ENCODE measurements at regions of chr2 and their contacts with region 1.

Region 1: GRCh38 chr2:235627682-235628081 is 133.8 kb downstream of the AGAP1 start:
- DNase-seq: no peak
- ATAC-seq: no peak
- H3K4me3 ChIP-seq: no peak overlapping the region
- H3K27ac ChIP-seq: no peak overlapping the region
- H3K4me1 ChIP-seq: no peaks in the 10 kb centered on the region
- H3K27me3 ChIP-seq: no peaks in the 10 kb centered on the region
- CTCF ChIP-seq: no peak

Region 2: DNA sequence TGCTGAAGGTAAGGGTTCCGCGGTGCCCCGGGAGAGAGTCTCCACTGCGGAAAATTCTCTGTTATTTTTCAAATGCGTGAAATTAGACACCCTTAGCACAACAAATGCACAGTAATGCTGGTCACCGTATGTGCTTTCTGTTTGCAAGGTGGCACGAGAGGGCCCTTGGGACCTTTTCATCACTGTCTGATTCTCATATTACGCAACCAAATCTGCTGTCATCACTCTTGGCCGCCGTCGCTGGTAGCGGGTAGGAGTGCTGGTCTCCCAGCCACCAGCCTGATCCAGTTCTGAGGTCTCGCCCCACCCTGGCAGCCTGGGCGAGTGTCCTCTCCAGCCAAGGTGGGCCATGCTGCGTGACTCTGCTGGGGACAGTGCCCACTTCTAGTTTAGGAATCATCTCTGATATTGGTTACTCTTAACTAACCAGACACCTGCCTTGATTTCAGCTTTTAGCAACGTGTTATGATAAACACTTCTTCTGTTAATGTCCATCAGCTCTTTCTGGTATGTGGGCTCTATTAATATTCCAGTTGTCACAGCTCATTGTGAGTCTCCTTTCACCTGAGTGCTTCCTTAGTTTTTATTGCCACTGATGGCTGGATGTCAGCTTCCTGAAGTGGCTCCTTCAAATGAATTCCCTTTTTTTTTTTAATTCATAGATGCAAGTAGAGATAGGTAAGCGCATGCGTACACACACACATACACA is 341.1 kb after region 1 on chr2:
- CTCF ChIA-PET with region 1: no interaction called
- POLR2A ChIA-PET with region 1: interaction called, 14 read pairs
- in situ Hi-C with region 1: no loop called
- intact Hi-C with region 1: no loop called
- DNase-seq: no peak
- ATAC-seq: no peak
- H3K4me3 ChIP-seq: no peak overlapping the region
- H3K27ac ChIP-seq: no peak overlapping the region
- H3K4me1 ChIP-seq: no peaks in the 10 kb centered on the region
- H3K27me3 ChIP-seq: no peaks in the 10 kb centered on the region
- CTCF ChIP-seq: no peak

Region 3: GRCh38 chr2:236136538-236136937 is 508.9 kb after region 1 on chr2:
- CTCF ChIA-PET with region 1: no interaction called
- POLR2A ChIA-PET with region 1: no interaction called
- in situ Hi-C with region 1: no loop called
- intact Hi-C with region 1: no loop called
- DNase-seq: no peak
- ATAC-seq: no peak
- H3K4me3 ChIP-seq: no peak overlapping the region
- H3K27ac ChIP-seq: no peak overlapping the region
- H3K4me1 ChIP-seq: no peaks in the 10 kb centered on the region
- H3K27me3 ChIP-seq: no peaks in the 10 kb centered on the region
- CTCF ChIP-seq: no peak